Activated naive CD8-positive, alpha-beta T cell treated with anti-CD3 and anti-CD28 coated beads, Interleukin-2, amount 10 ng/mL, durations not matched to agents 7 days and 5 days (primary cell): ENCODE measurements at regions of chr11 and their contacts with region 1.

Region 1: DNA sequence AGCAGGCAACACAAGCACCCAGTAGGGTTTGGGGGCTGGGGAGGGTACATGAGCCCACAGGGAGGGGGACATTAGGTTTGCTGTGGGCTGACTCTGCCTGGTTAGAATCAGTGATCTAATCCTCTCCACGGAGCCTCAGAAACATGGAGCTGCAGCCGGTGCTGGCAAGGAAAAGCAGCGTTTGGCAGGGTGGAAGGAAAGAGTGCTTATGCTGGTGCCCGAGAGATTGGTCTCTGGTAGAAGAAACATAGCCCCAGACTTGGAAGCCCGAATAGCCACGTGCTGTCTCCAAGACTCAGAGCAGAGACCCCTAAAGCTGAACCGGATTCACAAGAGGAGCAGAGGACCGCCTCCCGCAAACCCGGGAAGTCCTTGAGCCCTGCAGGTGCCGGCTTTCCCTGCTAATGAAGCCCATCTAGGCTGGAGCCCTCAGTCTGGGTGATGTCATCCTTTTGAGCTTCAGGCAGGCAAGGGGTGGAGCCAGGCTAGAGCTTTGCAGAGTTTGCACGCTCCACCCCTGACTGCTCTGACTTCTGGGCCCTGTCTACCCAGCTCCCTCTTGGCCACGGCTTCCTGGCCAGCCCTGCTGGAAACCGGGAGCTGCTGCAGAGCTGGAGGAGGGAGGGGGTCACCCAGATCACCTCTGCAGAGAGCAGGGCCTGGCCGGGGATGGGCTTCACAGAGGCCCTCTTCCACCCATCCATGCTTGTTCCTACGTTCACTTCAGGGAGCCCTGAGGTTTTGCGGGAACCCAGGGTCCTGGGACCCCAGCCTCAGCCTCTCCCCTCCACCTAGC is 35.0 kb upstream of the JAM3 start:
- DNase-seq: peak; percentile 73
- ATAC-seq: peak; percentile 91
- H3K4me3 Mint-ChIP-seq: peak overlapping the region; percentile 66
- H3K27ac Mint-ChIP-seq: peak overlapping the region; percentile 74
- H3K4me1 Mint-ChIP-seq: peaks cover 44% of the 10 kb centered on the region
- H3K27me3 Mint-ChIP-seq: peaks cover 3% of the 10 kb centered on the region

Region 2: GRCh38 chr11:133927690-133928627 is 105.9 kb before region 1 on chr11:
- POLR2A ChIA-PET with region 1: interaction called, 10 read pairs
- DNase-seq: peak; percentile 76
- ATAC-seq: peak; percentile 71
- H3K4me3 Mint-ChIP-seq: peak overlapping the region; percentile 74
- H3K27ac Mint-ChIP-seq: peak overlapping the region; percentile 83
- H3K4me1 Mint-ChIP-seq: peaks cover 28% of the 10 kb centered on the region
- H3K27me3 Mint-ChIP-seq: no peaks in the 10 kb centered on the region

Region 3: GRCh38 chr11:133947321-133947756 is 86.6 kb before region 1 on chr11:
- POLR2A ChIA-PET with region 1: interaction called, 11 read pairs
- DNase-seq: peak; percentile 82
- ATAC-seq: peak; percentile 41
- H3K4me3 Mint-ChIP-seq: peak overlapping the region; percentile 92
- H3K27ac Mint-ChIP-seq: peak overlapping the region; percentile 93
- H3K4me1 Mint-ChIP-seq: peaks cover 69% of the 10 kb centered on the region
- H3K27me3 Mint-ChIP-seq: no peaks in the 10 kb centered on the region

Region 4: GRCh38 chr11:134062265-134063123 is 28.6 kb after region 1 on chr11:
- POLR2A ChIA-PET with region 1: no interaction called
- DNase-seq: no peak
- ATAC-seq: no peak
- H3K4me3 Mint-ChIP-seq: no peak overlapping the region
- H3K27ac Mint-ChIP-seq: no peak overlapping the region
- H3K4me1 Mint-ChIP-seq: peaks cover 33% of the 10 kb centered on the region
- H3K27me3 Mint-ChIP-seq: peaks cover 41% of the 10 kb centered on the region